ENCODE measurements at regions of chr12 and their contacts with region 1.

Region 1: DNA sequence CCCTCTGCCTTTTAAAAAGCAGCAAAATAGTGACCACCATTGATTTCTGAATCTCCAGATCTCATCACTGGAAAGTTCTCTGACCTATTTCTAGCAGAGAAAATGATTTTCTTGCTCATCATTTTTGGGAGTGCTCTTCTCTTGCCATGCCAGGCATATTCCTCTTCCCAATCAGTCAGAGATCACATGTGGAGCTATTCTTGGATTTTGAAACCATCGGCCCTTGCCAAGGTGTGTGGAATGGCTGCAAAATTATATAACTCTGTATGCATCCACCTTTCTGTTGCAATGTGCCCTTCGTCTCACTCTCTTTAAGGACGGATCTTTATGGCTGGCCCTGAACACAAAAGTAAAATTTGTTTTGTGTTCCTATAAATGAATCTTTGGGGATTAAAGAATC is 25.5 kb upstream of the LDHB start:
- DNase-seq: no peak
- ATAC-seq: no peak
- H3K4me3 Mint-ChIP-seq: no peak overlapping the region
- H3K27ac Mint-ChIP-seq: no peak overlapping the region
- H3K4me1 Mint-ChIP-seq: no peaks in the 10 kb centered on the region
- H3K27me3 Mint-ChIP-seq: peaks cover 11% of the 10 kb centered on the region
- CTCF ChIP-seq: no peak

Region 2: DNA sequence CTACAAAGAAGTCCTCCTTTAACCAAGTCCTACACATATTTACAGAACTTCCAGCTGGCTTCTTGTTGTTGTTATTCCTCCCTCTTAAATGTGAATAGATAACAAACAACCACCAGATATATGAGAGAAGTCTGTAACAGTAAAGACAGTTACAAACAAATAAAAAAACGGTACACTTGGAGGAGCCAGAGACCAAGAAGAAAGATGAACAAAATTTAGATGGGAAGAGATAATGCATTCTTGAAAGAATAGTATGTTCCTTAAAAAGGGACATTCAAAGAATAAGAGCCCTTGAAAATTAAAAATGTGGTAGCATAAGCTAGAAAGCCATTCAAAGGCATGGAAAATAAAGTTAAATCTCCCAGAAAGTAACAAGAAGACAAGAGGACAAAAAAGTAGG is 374.3 kb before region 1 on chr12:
- CTCF ChIA-PET with region 1: interaction called, 3 read pairs
- POLR2A ChIA-PET with region 1: no interaction called
- intact Hi-C with region 1: loop called (anchors 5 kb)
- DNase-seq: no peak
- ATAC-seq: no peak
- H3K4me3 Mint-ChIP-seq: no peak overlapping the region
- H3K27ac Mint-ChIP-seq: no peak overlapping the region
- H3K4me1 Mint-ChIP-seq: no peaks in the 10 kb centered on the region
- H3K27me3 Mint-ChIP-seq: no peaks in the 10 kb centered on the region
- CTCF ChIP-seq: no peak